CD4-positive, alpha-beta memory T cell (primary cell): ENCODE measurements at regions of chr15 and their contacts with region 1.

Region 1: GRCh38 chr15:90362936-90363212 is 10.8 kb downstream of the ZNF774 start:
- DNase-seq: no peak
- H3K4me3 ChIP-seq: no peak overlapping the region
- H3K4me3 Mint-ChIP-seq: no peak overlapping the region
- H3K27ac ChIP-seq: no peak overlapping the region
- H3K27ac Mint-ChIP-seq: no peak overlapping the region
- H3K4me1 ChIP-seq: peaks cover 15% of the 10 kb centered on the region
- H3K4me1 Mint-ChIP-seq: peaks cover 15 to 28% (median 22%) of the 10 kb centered on the region in 4 donors
- H3K27me3 ChIP-seq: no peaks in the 10 kb centered on the region
- H3K27me3 Mint-ChIP-seq: no peaks in the 10 kb centered on the region

Region 2: DNA sequence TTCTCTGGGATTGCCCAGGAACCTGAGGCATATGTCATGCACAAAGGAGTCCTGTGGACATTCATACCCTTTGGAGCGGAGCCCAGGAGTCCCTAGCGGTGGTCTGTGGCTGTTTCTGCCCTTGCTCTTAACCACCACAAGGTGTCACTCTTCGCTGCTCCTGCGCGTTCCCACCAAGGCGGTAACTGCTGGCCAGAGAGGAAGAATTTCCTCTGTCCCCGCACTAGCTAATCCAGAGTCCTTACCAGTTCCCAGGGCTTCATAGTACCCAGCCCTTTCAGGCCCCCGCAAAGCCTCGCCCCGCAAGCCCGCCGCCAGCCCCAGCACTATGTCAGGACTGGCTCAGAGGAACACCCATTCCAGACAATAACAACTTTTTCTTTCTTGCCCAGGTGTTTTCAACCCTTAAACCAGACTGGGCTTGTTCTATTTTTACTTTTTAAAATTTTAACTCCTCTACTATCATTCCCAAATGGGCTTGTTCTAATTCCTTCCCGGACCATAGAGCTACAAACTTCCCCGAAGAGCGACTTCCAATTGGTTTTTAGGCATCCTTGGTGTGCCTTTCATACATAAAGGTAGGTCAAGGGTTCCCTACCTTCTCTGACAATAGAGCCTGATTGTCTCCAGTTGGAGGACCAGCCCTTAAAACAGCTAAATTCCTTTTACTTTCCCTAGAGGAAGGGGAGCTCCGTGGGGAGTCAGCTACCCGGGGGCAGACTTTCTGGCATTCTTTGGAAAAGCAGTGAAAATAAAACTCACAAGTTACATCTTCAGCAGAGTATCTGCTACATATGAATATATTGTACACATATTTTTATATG is 42.6 kb before region 1 on chr15:
- CTCF ChIA-PET with region 1: interaction called, 43 read pairs
- POLR2A ChIA-PET with region 1: no interaction called
- intact Hi-C with region 1: loop called (anchors 1 kb)
- DNase-seq: peak; percentile 64 to 71 (median 68)
- H3K4me3 ChIP-seq: no peak overlapping the region
- H3K4me3 Mint-ChIP-seq: peak overlapping the region in 2 of 8 donors; percentile 53 to 56
- H3K27ac ChIP-seq: no peak overlapping the region
- H3K27ac Mint-ChIP-seq: peak overlapping the region in 2 of 7 donors; percentile 53 to 73
- H3K4me1 ChIP-seq: peaks cover 7% of the 10 kb centered on the region
- H3K4me1 Mint-ChIP-seq: peaks cover 5 to 8% (median 7%) of the 10 kb centered on the region in 4 donors
- H3K27me3 ChIP-seq: no peaks in the 10 kb centered on the region
- H3K27me3 Mint-ChIP-seq: peaks cover 0 to 3% of the 10 kb centered on the region in 2 donors

Region 3: GRCh38 chr15:90376789-90377188 is 13.9 kb after region 1 on chr15:
- CTCF ChIA-PET with region 1: interaction called, 8 read pairs
- POLR2A ChIA-PET with region 1: interaction called, 10 read pairs
- intact Hi-C with region 1: no loop called
- DNase-seq: peak; percentile 78 to 83 (median 80)
- H3K4me3 ChIP-seq: peak overlapping the region in 1 of 2 donors; percentile 11
- H3K4me3 Mint-ChIP-seq: peak overlapping the region; percentile 58 to 86 (median 73)
- H3K27ac ChIP-seq: no peak overlapping the region
- H3K27ac Mint-ChIP-seq: peak overlapping the region; percentile 41 to 95 (median 65)
- H3K4me1 ChIP-seq: peaks cover 46% of the 10 kb centered on the region
- H3K4me1 Mint-ChIP-seq: peaks cover 21 to 53% (median 43%) of the 10 kb centered on the region in 4 donors
- H3K27me3 ChIP-seq: no peaks in the 10 kb centered on the region
- H3K27me3 Mint-ChIP-seq: no peaks in the 10 kb centered on the region

Region 4: GRCh38 chr15:90400406-90401314 is 37.8 kb after region 1 on chr15:
- CTCF ChIA-PET with region 1: interaction called, 26 read pairs
- POLR2A ChIA-PET with region 1: interaction called, 4 read pairs
- intact Hi-C with region 1: loop called (anchors 1 kb)
- DNase-seq: peak; percentile 79 to 91 (median 88)
- H3K4me3 ChIP-seq: peak overlapping the region in 1 of 2 donors; percentile 3
- H3K4me3 Mint-ChIP-seq: peak overlapping the region; percentile 75 to 88 (median 80)
- H3K27ac ChIP-seq: peak overlapping the region; percentile 93
- H3K27ac Mint-ChIP-seq: peak overlapping the region; percentile 97 to 100 (median 99)
- H3K4me1 ChIP-seq: peaks cover 72% of the 10 kb centered on the region
- H3K4me1 Mint-ChIP-seq: peaks cover 49 to 76% (median 60%) of the 10 kb centered on the region in 4 donors
- H3K27me3 ChIP-seq: no peaks in the 10 kb centered on the region
- H3K27me3 Mint-ChIP-seq: no peaks in the 10 kb centered on the region

Region 5: GRCh38 chr15:90419738-90420406 is 57.0 kb after region 1 on chr15:
- CTCF ChIA-PET with region 1: interaction called, 23 read pairs
- POLR2A ChIA-PET with region 1: interaction called, 3 read pairs
- intact Hi-C with region 1: no loop called
- DNase-seq: no peak
- H3K4me3 ChIP-seq: no peak overlapping the region
- H3K4me3 Mint-ChIP-seq: peak overlapping the region in 6 of 8 donors; percentile 1 to 64 (median 60)
- H3K27ac ChIP-seq: no peak overlapping the region
- H3K27ac Mint-ChIP-seq: peak overlapping the region in 6 of 7 donors; percentile 49 to 79 (median 70)
- H3K4me1 ChIP-seq: peaks cover 60% of the 10 kb centered on the region
- H3K4me1 Mint-ChIP-seq: peaks cover 44 to 83% (median 62%) of the 10 kb centered on the region in 4 donors
- H3K27me3 ChIP-seq: no peaks in the 10 kb centered on the region
- H3K27me3 Mint-ChIP-seq: no peaks in the 10 kb centered on the region

Region 6: GRCh38 chr15:90451053-90451850 is 88.4 kb after region 1 on chr15:
- CTCF ChIA-PET with region 1: interaction called, 5 read pairs
- POLR2A ChIA-PET with region 1: no interaction called
- intact Hi-C with region 1: loop called (anchors 1 kb)
- DNase-seq: no peak
- H3K4me3 ChIP-seq: no peak overlapping the region
- H3K4me3 Mint-ChIP-seq: no peak overlapping the region
- H3K27ac ChIP-seq: no peak overlapping the region
- H3K27ac Mint-ChIP-seq: peak overlapping the region in 2 of 7 donors; percentile 48 to 68
- H3K4me1 ChIP-seq: no peaks in the 10 kb centered on the region
- H3K4me1 Mint-ChIP-seq: peaks cover 0 to 9% (median 2%) of the 10 kb centered on the region in 4 donors
- H3K27me3 ChIP-seq: no peaks in the 10 kb centered on the region
- H3K27me3 Mint-ChIP-seq: no peaks in the 10 kb centered on the region

Region 7: GRCh38 chr15:90603893-90604292 is 241.0 kb after region 1 on chr15:
- CTCF ChIA-PET with region 1: interaction called, 5 read pairs
- POLR2A ChIA-PET with region 1: no interaction called
- intact Hi-C with region 1: loop called (anchors 2 kb)
- DNase-seq: peak in 4 of 5 donors; percentile 22 to 35 (median 30)
- H3K4me3 ChIP-seq: no peak overlapping the region
- H3K4me3 Mint-ChIP-seq: no peak overlapping the region
- H3K27ac ChIP-seq: no peak overlapping the region
- H3K27ac Mint-ChIP-seq: peak overlapping the region in 5 of 7 donors; percentile 12 to 75 (median 60)
- H3K4me1 ChIP-seq: peaks cover 19% of the 10 kb centered on the region
- H3K4me1 Mint-ChIP-seq: peaks cover 9 to 41% (median 31%) of the 10 kb centered on the region in 4 donors
- H3K27me3 ChIP-seq: no peaks in the 10 kb centered on the region
- H3K27me3 Mint-ChIP-seq: no peaks in the 10 kb centered on the region